Vagina (tissue), 2 donors: ENCODE measurements at regions of chr10 and their contacts with region 1.

Region 1: DNA sequence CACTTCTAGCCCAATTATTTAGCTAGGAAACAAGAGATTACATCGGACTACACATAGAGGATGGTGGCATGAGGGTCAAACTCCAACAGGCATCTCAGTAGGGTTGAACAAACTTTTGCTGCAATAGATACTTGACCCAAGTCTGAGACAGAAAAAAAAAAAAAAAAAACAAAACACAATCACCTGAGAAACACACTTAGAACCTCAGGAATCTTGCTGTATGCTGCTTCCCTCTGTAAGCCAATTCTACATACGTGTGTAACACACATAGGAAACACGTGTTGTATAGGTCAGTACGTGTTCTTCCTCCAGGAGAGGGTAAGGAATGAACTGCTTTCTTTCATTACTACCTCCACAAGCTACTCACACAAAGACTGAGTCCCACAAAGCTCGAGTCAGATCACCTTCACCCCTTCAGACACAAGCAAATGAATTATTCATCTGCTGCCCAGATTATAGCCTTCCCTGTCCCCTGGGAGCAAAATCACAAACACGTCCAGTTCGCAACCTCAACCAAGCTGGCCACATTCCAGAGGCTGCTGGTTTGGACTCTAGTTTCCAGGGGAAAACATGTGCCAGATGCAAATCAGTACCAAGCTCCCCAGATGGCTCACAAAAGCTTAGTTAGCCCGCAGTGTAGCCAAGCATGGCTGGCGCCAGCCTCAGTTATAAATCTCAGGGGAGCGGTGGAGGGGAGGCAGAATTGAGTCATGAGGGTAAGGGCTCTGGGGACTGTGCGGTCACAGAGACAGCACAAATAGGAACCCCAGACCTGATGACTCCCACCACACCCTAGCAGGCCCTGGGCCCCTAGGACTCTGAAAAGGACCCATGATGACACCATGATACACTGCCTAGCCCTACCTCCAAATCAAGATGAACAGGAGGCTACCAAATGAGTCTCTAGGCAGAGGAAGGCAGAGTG is 15.1 kb downstream of the PSAP start:
- DNase-seq: no peak
- H3K4me3 ChIP-seq: peak overlapping the region in 1 of 2 donors; percentile 21
- H3K27ac ChIP-seq: peak overlapping the region; percentile 71
- H3K4me1 ChIP-seq: peaks cover 86% of the 10 kb centered on the region
- H3K27me3 ChIP-seq: no peaks in the 10 kb centered on the region
- CTCF ChIP-seq: no peak
- POLR2A ChIP-seq: no peak

Region 2: DNA sequence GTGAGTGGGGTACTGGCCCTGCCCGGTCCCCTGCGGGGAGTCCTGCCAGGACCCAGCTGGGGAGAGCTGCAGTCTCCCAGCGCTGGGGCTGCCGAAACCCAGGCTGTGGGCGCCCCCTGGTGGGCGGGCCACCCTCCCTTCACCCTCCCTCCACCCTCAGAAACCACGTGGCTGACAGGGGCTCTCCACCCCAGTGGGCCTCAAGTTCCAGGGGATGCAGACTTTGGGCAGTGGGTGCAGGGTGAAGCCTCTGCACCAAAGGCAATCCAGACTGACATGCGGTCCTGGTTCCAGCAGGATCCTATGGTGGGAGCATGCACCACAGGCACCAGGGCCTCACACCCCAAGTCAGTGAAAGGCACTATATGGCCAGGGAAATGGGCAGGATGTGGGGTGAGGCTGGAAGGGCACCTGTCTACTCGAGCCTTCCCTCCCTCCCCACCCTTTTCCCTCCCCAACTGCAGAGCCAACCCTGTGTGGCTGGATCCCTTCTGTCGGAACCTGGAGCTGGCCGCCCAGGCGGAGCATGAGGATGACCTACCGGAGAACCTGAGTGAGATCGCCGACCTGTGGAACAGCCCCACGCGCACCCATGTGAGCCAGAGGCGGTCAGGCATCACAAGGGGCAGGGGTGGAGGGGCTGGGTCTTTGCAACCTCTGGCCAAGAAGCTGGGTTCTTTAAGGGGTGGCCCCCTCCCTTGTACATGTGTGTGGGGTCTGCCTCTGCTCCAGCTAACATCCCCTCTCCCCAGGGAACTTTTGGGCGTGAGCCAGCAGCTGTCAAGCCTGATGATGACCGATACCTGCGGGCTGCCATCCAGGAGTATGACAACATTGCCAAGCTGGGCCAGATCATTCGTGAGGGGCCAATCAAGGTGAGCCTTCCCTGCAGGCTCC is 23.7 kb before region 1 on chr10:
- intact Hi-C with region 1: no loop called
- DNase-seq: no peak
- H3K4me3 ChIP-seq: no peak overlapping the region
- H3K27ac ChIP-seq: no peak overlapping the region
- H3K4me1 ChIP-seq: peaks cover 14% of the 10 kb centered on the region
- H3K27me3 ChIP-seq: no peaks in the 10 kb centered on the region
- CTCF ChIP-seq: peak in 2 of 3 experiments; percentile 81 to 85
- POLR2A ChIP-seq: no peak

Region 3: GRCh38 chr10:71888623-71889387 is 52.9 kb after region 1 on chr10:
- intact Hi-C with region 1: loop called (anchors 5 kb)
- DNase-seq: no peak
- H3K4me3 ChIP-seq: peak overlapping the region; percentile 50 to 51
- H3K27ac ChIP-seq: peak overlapping the region; percentile 85
- H3K4me1 ChIP-seq: peaks cover 44% of the 10 kb centered on the region
- H3K27me3 ChIP-seq: no peaks in the 10 kb centered on the region
- CTCF ChIP-seq: no peak
- POLR2A ChIP-seq: peak in 1 of 2 donors; percentile 35